ENCODE measurements at regions of chr6 and their contacts with region 1.

Region 1: GRCh38 chr6:16206595-16207037 is 31.8 kb upstream of the GMPR start:
- DNase-seq: peak in 22 of 35 experiments; percentile 7 to 68 (median 28)
- ATAC-seq: peak; percentile 45 to 69 (median 54)
- H3K4me3 ChIP-seq: no peak overlapping the region
- H3K4me3 Mint-ChIP-seq: no peak overlapping the region
- H3K27ac ChIP-seq: no peak overlapping the region
- H3K27ac Mint-ChIP-seq: no peak overlapping the region
- H3K4me1 ChIP-seq: no peaks in the 10 kb centered on the region
- H3K4me1 Mint-ChIP-seq: peaks cover 3 to 5% (median 3%) of the 10 kb centered on the region in 3 donors
- H3K27me3 ChIP-seq: peaks cover 0 to 23% of the 10 kb centered on the region in 2 experiments
- H3K27me3 Mint-ChIP-seq: peaks cover 14 to 20% of the 10 kb centered on the region in 2 donors

Region 2: DNA sequence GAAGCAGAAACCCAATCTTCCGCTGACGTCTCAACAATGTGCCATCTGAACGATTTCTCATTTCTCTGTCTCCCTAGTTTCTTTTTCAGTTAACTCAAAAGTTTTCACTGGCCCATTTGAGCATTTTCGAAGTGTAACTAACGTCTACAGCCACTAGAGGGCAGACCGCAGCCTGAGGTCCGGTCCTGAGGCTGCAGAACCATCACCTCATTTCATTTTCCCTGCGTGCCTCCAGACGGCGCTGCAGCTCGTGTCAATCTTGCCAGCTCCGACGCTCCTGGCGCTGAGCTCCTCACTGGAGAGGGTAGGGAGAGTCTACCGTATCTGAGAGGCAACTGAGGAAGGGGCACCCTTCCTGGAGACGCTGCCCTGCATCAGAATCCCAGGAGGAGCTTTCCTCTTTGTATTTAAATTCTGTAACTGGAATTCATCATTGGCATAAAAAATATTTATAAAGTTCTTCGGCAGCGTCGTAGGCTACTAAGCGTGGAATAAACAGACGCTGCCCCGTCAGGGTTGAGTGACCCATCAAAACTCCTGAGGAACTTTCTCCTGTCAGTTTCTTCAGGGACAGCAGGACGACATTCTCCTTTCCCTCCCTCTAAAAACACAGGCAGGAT is 515.3 kb before region 1 on chr6:
- CTCF ChIA-PET with region 1: interaction called, 22 to 79 read pairs
- POLR2A ChIA-PET with region 1: no interaction called
- DNase-seq: peak; percentile 40 to 92 (median 73)
- ATAC-seq: peak; percentile 96 to 100 (median 97)
- H3K4me3 ChIP-seq: no peak overlapping the region
- H3K4me3 Mint-ChIP-seq: no peak overlapping the region
- H3K27ac ChIP-seq: no peak overlapping the region
- H3K27ac Mint-ChIP-seq: peak overlapping the region in 1 of 2 donors; percentile 25
- H3K4me1 ChIP-seq: peaks cover 0 to 4% of the 10 kb centered on the region in 2 experiments
- H3K4me1 Mint-ChIP-seq: peaks cover 6 to 8% (median 8%) of the 10 kb centered on the region in 3 donors
- H3K27me3 ChIP-seq: peaks cover 0 to 9% of the 10 kb centered on the region in 2 experiments
- H3K27me3 Mint-ChIP-seq: peaks cover 0 to 4% of the 10 kb centered on the region in 2 donors

Region 3: GRCh38 chr6:16216501-16217155 is 10.0 kb after region 1 on chr6:
- CTCF ChIA-PET with region 1: interaction called, 3 to 10 read pairs
- POLR2A ChIA-PET with region 1: no interaction called
- DNase-seq: no peak
- ATAC-seq: no peak
- H3K4me3 ChIP-seq: no peak overlapping the region
- H3K4me3 Mint-ChIP-seq: no peak overlapping the region
- H3K27ac ChIP-seq: no peak overlapping the region
- H3K27ac Mint-ChIP-seq: no peak overlapping the region
- H3K4me1 ChIP-seq: no peaks in the 10 kb centered on the region
- H3K4me1 Mint-ChIP-seq: no peaks in the 10 kb centered on the region
- H3K27me3 ChIP-seq: peaks cover 0 to 27% of the 10 kb centered on the region in 2 experiments
- H3K27me3 Mint-ChIP-seq: peaks cover 32 to 36% of the 10 kb centered on the region in 2 donors

Region 4: DNA sequence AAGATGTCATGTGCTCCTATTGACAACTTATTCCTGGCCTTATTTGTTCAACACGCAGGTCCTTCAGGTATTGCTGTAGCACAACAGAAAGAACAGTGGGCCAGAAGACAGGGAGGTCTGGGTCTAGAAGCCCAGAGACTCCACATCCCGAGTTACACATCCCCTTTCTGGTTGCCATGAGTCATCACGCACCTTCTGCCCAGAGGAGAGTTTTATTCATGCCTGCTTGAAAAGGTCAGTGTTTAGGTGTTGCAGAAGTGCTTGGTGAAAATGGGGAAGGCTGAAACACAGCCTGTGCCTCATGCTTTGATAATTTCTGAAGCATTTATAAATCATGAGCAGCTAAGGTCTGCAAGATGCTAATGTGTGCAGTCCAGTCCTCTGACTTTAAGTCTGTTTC is 288.2 kb after region 1 on chr6:
- CTCF ChIA-PET with region 1: no interaction called
- POLR2A ChIA-PET with region 1: no interaction called
- DNase-seq: no peak
- ATAC-seq: no peak
- H3K4me3 ChIP-seq: no peak overlapping the region
- H3K4me3 Mint-ChIP-seq: no peak overlapping the region
- H3K27ac ChIP-seq: no peak overlapping the region
- H3K27ac Mint-ChIP-seq: peak overlapping the region in 1 of 2 donors; percentile 41
- H3K4me1 ChIP-seq: peaks cover 7 to 12% of the 10 kb centered on the region in 2 experiments
- H3K4me1 Mint-ChIP-seq: peaks cover 36 to 50% (median 50%) of the 10 kb centered on the region in 3 donors
- H3K27me3 ChIP-seq: no peaks in the 10 kb centered on the region
- H3K27me3 Mint-ChIP-seq: no peaks in the 10 kb centered on the region